ENCODE measurements at regions of chr7 and their contacts with region 1.

Region 1: DNA sequence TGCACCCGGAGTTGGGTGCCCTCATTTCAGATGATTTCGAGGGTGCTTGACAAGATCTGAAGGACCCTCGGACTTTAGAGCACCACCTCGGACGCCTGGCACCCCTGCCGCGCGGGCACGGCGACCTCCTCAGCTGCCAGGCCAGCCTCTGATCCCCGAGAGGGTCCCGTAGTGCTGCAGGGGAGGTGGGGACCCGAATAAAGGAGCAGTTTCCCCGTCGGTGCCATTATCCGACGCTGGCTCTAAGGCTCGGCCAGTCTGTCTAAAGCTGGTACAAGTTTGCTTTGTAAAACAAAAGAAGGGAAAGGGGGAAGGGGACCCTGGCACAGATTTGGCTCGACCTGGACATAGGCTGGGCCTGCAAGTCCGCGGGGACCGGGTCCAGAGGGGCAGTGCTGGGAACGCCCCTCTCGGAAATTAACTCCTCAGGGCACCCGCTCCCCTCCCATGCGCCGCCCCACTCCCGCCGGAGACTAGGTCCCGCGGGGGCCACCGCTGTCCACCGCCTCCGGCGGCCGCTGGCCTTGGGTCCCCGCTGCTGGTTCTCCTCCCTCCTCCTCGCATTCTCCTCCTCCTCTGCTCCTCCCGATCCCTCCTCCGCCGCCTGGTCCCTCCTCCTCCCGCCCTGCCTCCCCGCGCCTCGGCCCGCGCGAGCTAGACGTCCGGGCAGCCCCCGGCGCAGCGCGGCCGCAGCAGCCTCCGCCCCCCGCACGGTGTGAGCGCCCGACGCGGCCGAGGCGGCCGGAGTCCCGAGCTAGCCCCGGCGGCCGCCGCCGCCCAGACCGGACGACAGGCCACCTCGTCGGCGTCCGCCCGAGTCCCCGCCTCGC is at the start of gene EGFR:
- DNase-seq: no peak
- ATAC-seq: peak; percentile 94
- H3K4me3 ChIP-seq: peak within 1 kb of the TSS; percentile 74 to 85
- H3K27ac ChIP-seq: peak within 1 kb of the TSS; percentile 91
- H3K4me1 ChIP-seq: peaks cover 31% of the 10 kb centered on the region
- H3K27me3 ChIP-seq: no peaks in the 10 kb centered on the region
- CTCF ChIP-seq: no peak
- total RNA-seq, gene EGFR: 156 TPM

Region 2: GRCh38 chr7:55073945-55074499 is 55.4 kb after region 1 on chr7:
- CTCF ChIA-PET with region 1: interaction called, 5 read pairs
- POLR2A ChIA-PET with region 1: no interaction called
- in situ Hi-C with region 1: no loop called
- intact Hi-C with region 1: loop called (anchors 5 kb)
- DNase-seq: peak; percentile 99
- ATAC-seq: peak; percentile 89
- H3K4me3 ChIP-seq: peak overlapping the region; percentile 36 to 48
- H3K27ac ChIP-seq: peak overlapping the region; percentile 100
- H3K4me1 ChIP-seq: peaks cover 97% of the 10 kb centered on the region
- H3K27me3 ChIP-seq: no peaks in the 10 kb centered on the region
- CTCF ChIP-seq: no peak

Measured in Panc1 (cell line).